ENCODE measurements at regions of chr10 and their contacts with region 1.

Region 1: GRCh38 chr10:28381903-28382347 is 79.1 kb upstream of the MPP7 start:
- DNase-seq: peak; percentile 58
- H3K4me3 Mint-ChIP-seq: no peak overlapping the region
- H3K27ac Mint-ChIP-seq: no peak overlapping the region
- H3K4me1 Mint-ChIP-seq: peaks cover 24% of the 10 kb centered on the region
- H3K27me3 Mint-ChIP-seq: peaks cover 22% of the 10 kb centered on the region

Region 2: GRCh38 chr10:28171468-28172222 is 210.3 kb before region 1 on chr10:
- intact Hi-C with region 1: no loop called
- DNase-seq: no peak
- H3K4me3 Mint-ChIP-seq: no peak overlapping the region
- H3K27ac Mint-ChIP-seq: no peak overlapping the region
- H3K4me1 Mint-ChIP-seq: peaks cover 5% of the 10 kb centered on the region
- H3K27me3 Mint-ChIP-seq: peaks cover 2% of the 10 kb centered on the region

Region 3: DNA sequence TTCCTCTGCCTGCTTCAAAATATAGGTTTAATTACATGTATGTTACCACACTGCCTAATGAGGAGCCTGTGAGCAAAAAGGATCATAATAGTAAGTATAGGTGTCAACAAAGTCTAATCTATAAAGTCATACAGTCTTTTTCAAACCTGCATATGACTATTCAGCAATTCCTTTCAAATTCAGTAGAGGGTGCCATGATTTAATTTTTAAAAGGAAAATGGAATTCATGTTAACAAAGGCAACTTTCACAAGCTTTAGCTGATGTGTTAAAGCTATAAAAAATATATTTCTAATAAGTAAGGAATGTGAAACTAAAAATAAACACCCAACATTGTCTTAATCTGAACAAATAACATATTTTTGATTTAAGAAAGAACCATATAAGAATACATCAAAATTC is 131.1 kb before region 1 on chr10:
- intact Hi-C with region 1: loop called (anchors 1 kb)
- DNase-seq: no peak
- H3K4me3 Mint-ChIP-seq: no peak overlapping the region
- H3K27ac Mint-ChIP-seq: no peak overlapping the region
- H3K4me1 Mint-ChIP-seq: peaks cover 13% of the 10 kb centered on the region
- H3K27me3 Mint-ChIP-seq: no peaks in the 10 kb centered on the region

Region 4: DNA sequence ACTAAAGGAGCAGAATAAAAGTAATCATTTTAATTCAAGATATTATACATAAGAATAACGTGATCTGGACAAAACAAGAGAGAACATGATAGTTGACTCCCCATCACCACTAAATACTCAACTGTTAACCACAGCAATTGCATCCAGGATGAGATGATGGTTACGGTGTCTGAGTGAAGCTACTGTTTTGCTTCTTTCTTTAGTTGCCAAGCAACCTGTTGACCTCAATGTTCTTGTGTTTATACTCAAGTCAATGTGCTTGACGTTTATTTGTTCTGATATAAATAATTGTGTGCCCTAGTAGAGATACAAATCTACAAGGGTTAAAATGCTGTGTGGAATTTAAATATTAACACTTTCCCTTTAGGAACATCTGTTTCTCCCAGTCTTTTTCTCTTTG is 47.6 kb before region 1 on chr10:
- intact Hi-C with region 1: loop called (anchors 1 kb)
- DNase-seq: peak; percentile 66
- H3K4me3 Mint-ChIP-seq: peak overlapping the region; percentile 81
- H3K27ac Mint-ChIP-seq: peak overlapping the region; percentile 99
- H3K4me1 Mint-ChIP-seq: peaks cover 67% of the 10 kb centered on the region
- H3K27me3 Mint-ChIP-seq: peaks cover 21% of the 10 kb centered on the region

Region 5: GRCh38 chr10:28367929-28368484 is 13.9 kb before region 1 on chr10:
- intact Hi-C with region 1: loop called (anchors 1 kb)
- DNase-seq: peak; percentile 62
- H3K4me3 Mint-ChIP-seq: peak overlapping the region; percentile 75
- H3K27ac Mint-ChIP-seq: peak overlapping the region; percentile 93
- H3K4me1 Mint-ChIP-seq: peaks cover 27% of the 10 kb centered on the region
- H3K27me3 Mint-ChIP-seq: peaks cover 9% of the 10 kb centered on the region

Region 6: GRCh38 chr10:28393966-28394568 is 12.1 kb after region 1 on chr10:
- intact Hi-C with region 1: no loop called
- DNase-seq: peak; percentile 24
- H3K4me3 Mint-ChIP-seq: no peak overlapping the region
- H3K27ac Mint-ChIP-seq: no peak overlapping the region
- H3K4me1 Mint-ChIP-seq: peaks cover 7% of the 10 kb centered on the region
- H3K27me3 Mint-ChIP-seq: peaks cover 19% of the 10 kb centered on the region